ENCODE measurements at regions of chr2 and their contacts with region 1.

Region 1: DNA sequence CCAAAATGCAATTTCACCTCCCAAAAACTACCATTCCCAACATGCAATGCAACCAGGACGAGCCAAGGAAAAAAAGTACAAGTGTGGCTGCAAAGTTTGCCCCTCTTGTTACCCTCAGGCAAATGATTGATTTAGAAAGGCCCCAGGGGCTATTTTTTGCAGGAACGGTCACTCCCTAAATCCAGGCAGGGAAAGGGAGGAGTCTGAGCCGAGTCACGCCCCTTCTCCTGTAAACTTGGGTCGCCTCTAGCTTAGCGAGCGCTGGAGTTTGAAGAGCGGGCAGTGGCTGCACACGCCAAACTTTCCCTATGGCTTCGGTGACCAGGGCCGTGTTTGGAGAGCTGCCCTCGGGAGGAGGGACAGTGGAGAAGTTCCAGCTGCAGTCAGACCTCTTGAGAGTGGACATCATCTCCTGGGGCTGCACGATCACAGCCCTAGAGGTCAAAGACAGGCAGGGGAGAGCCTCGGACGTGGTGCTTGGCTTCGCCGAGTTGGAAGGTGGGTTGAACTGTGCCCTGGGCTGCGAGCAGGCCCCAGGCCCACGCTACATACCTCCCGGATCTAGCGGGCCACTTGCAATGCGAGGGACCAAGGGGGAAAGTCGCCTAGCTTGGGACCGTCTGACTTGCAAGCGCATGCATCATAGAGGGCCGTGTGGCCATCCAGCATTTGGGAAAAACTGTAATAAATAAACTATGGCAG is at the start of gene GALM:
- DNase-seq: peak; percentile 62
- ATAC-seq: peak; percentile 37
- H3K4me3 Mint-ChIP-seq: peak within 1 kb of the TSS; percentile 90
- H3K27ac Mint-ChIP-seq: peak within 1 kb of the TSS; percentile 92
- H3K4me1 Mint-ChIP-seq: peaks cover 51% of the 10 kb centered on the region
- H3K27me3 Mint-ChIP-seq: no peaks in the 10 kb centered on the region
- total RNA-seq, gene GALM: 28.3 to 30.2 TPM

Region 2: DNA sequence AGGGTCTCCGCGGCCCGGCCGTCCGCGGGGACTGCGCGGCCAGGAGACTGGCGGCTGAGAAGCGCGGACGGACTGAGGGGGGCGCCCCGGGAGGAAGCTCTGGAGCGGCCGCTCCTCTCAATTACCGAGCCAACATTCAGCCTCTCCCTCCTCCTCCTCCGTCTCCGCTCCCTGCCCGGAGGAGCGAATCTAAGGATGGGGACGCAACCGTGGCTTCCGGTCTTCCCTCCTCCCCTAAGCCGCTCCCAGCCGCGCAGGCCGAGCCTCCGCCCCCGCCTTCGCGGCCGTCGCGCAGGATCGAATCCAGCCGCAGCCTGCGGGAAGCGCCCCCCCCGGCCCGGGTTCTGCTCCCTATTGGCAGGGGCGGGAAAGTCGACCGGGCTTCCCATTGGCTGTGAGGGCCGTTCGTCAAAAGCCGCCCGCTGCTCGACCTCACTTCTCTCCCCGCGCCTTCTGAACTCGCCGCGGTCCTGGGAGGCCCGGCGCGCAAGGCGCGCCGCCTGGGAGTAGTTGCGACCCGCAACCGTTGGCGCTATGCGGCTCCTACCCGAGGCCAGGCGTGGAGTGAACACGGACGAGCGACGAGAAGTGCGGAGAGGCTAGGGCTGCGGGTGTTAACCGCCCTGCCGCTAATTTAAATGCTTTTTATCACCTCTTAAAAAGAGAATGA is 63.1 kb before region 1 on chr2 and contains the start of gene HNRNPLL:
- POLR2A ChIA-PET with region 1: interaction called, 57 read pairs
- DNase-seq: peak; percentile 96
- ATAC-seq: peak; percentile 86
- H3K4me3 Mint-ChIP-seq: peak within 1 kb of the TSS; percentile 94
- H3K27ac Mint-ChIP-seq: peak within 1 kb of the TSS; percentile 90
- H3K4me1 Mint-ChIP-seq: peaks cover 40% of the 10 kb centered on the region
- H3K27me3 Mint-ChIP-seq: no peaks in the 10 kb centered on the region
- total RNA-seq, gene HNRNPLL: 50.5 to 63.0 TPM

Measured in activated naive CD8-positive, alpha-beta T cell treated with anti-CD3 and anti-CD28 coated beads, Interleukin-2, amount 10 ng/mL, durations not matched to agents 7 days and 5 days (primary cell).